ENCODE measurements at regions of chr1 and their contacts with region 1.

Region 1: GRCh38 chr1:180533266-180533987 is 25.3 kb upstream of the OVAAL start:
- DNase-seq: peak in 1 of 2 experiments; percentile 51
- H3K4me3 ChIP-seq: no peak overlapping the region
- H3K27ac ChIP-seq: no peak overlapping the region
- H3K4me1 ChIP-seq: peaks cover 9% of the 10 kb centered on the region; the same call in 1 of the 2 replicates
- H3K27me3 ChIP-seq: no peaks in the 10 kb centered on the region
- CTCF ChIP-seq: peak; percentile 75

Region 2: GRCh38 chr1:180470031-180470430 is 63.4 kb before region 1 on chr1:
- CTCF ChIA-PET with region 1: no interaction called
- POLR2A ChIA-PET with region 1: no interaction called
- intact Hi-C with region 1: no loop called
- DNase-seq: no peak
- H3K4me3 ChIP-seq: no peak overlapping the region
- H3K27ac ChIP-seq: no peak overlapping the region
- H3K4me1 ChIP-seq: no peaks in the 10 kb centered on the region
- H3K27me3 ChIP-seq: no peaks in the 10 kb centered on the region
- CTCF ChIP-seq: no peak

Region 3: GRCh38 chr1:180778782-180779398 is 245.5 kb after region 1 on chr1:
- CTCF ChIA-PET with region 1: interaction called, 3 read pairs
- POLR2A ChIA-PET with region 1: no interaction called
- intact Hi-C with region 1: loop called (anchors 5 kb)
- DNase-seq: no peak
- H3K4me3 ChIP-seq: no peak overlapping the region
- H3K27ac ChIP-seq: no peak overlapping the region
- H3K4me1 ChIP-seq: no peaks in the 10 kb centered on the region
- H3K27me3 ChIP-seq: no peaks in the 10 kb centered on the region
- CTCF ChIP-seq: peak; percentile 60; the same call in 1 of the 2 replicates

Region 4: DNA sequence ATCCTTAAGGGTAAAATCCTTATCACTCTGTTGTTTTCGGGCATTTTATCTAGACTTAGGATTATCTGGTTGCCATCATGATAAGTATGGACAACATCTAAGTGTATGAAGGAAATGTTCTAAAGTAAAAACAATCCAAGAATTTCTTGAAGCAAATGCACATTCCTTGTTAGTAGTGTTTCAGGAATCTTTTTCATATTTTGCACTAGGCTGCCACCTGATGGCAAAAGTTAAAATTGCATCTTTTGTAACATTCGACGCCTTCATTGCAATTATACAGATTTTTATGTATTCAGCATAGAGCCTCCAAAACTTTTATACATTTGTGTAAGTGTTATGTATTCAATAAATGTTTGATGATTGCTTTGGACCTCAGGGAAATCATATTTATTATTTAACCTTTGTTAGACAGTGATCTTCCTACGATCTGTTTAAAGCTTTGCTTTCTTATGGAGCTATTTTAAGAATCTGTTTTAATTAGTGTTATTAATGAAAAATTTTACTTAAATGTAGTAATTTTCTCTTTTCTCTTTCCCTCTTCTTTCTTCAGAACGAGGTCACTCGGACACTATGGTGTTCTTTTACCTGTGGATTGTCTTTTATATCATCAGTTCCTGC is 329.8 kb after region 1 on chr1:
- CTCF ChIA-PET with region 1: interaction called, 3 read pairs
- POLR2A ChIA-PET with region 1: no interaction called
- intact Hi-C with region 1: loop called (anchors 5 kb)
- DNase-seq: peak; percentile 31 to 52
- H3K4me3 ChIP-seq: no peak overlapping the region
- H3K27ac ChIP-seq: no peak overlapping the region
- H3K4me1 ChIP-seq: no peaks in the 10 kb centered on the region
- H3K27me3 ChIP-seq: no peaks in the 10 kb centered on the region
- CTCF ChIP-seq: peak; percentile 91